ENCODE measurements at regions of chr16 and their contacts with region 1.

Region 1: DNA sequence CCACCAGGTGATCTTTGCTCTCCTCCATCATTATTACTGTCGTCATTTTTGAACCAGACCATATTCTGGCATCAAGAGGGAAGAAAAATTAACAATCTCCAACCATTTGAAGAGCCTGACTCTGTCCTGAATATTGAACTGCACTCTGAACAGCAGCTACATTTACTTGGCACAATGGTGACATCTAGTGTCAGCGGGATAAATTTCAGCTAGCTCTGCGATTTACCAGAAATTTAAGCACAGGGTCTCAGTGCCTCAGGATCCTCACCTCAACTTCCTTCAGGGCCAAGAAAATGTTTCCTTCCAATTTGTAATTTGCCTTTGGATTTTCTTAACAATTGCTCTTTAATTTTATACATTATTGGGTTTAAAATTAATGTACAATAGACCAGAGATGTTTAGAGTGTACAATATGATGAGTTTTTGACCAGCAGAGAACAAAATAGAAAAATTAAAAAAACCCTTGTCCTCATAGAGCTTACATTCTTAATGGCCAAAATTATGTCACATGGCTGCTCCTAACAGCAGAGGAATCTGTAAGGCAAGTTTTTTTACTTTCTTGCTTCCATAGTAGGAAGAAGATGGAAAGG is 10.7 kb upstream of the ZNF19 start:
- DNase-seq: no peak
- H3K4me3 ChIP-seq: no peak overlapping the region
- H3K27ac ChIP-seq: no peak overlapping the region
- H3K4me1 ChIP-seq: no peaks in the 10 kb centered on the region
- H3K27me3 ChIP-seq: peaks cover 51% of the 10 kb centered on the region
- CTCF ChIP-seq: peak; percentile 75

Region 2: GRCh38 chr16:71412270-71413160 is 87.4 kb before region 1 on chr16:
- intact Hi-C with region 1: loop called (anchors 5 kb)
- DNase-seq: peak; percentile 28
- H3K4me3 ChIP-seq: no peak overlapping the region
- H3K27ac ChIP-seq: no peak overlapping the region
- H3K4me1 ChIP-seq: no peaks in the 10 kb centered on the region
- H3K27me3 ChIP-seq: peaks cover 89% of the 10 kb centered on the region
- CTCF ChIP-seq: peak; percentile 91

Region 3: DNA sequence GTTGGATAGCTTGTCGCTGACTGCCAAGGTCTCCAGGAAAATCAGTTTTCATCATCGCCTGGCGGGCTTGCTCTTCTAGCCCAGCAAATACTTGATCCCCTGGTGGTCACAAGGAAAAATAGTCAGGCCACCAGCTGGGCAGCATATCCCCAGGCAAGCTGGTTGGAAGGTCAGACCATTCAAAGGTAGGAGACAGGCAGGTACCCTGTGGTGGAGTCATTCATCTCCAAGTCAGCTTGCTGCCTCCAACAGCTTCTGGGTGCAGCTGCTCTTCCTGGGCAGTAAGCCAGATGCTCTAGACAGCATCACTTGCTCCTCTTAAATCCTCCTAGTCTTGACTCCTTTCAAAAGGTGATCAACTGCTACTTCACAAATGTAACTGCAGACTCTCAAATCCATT is 368.1 kb after region 1 on chr16:
- intact Hi-C with region 1: no loop called
- DNase-seq: no peak
- H3K4me3 ChIP-seq: no peak overlapping the region
- H3K27ac ChIP-seq: no peak overlapping the region
- H3K4me1 ChIP-seq: no peaks in the 10 kb centered on the region
- H3K27me3 ChIP-seq: no peaks in the 10 kb centered on the region
- CTCF ChIP-seq: no peak

Region 4: GRCh38 chr16:72021043-72021442 is 521.2 kb after region 1 on chr16:
- intact Hi-C with region 1: no loop called
- DNase-seq: no peak
- H3K4me3 ChIP-seq: no peak overlapping the region
- H3K27ac ChIP-seq: no peak overlapping the region
- H3K4me1 ChIP-seq: peaks cover 12% of the 10 kb centered on the region
- H3K27me3 ChIP-seq: no peaks in the 10 kb centered on the region
- CTCF ChIP-seq: peak; percentile 20

Measured in left ventricle myocardium inferior (tissue), 1 donor.